MCF 10A (cell line): ENCODE measurements at regions of chr19 and their contacts with region 1.

Region 1: DNA sequence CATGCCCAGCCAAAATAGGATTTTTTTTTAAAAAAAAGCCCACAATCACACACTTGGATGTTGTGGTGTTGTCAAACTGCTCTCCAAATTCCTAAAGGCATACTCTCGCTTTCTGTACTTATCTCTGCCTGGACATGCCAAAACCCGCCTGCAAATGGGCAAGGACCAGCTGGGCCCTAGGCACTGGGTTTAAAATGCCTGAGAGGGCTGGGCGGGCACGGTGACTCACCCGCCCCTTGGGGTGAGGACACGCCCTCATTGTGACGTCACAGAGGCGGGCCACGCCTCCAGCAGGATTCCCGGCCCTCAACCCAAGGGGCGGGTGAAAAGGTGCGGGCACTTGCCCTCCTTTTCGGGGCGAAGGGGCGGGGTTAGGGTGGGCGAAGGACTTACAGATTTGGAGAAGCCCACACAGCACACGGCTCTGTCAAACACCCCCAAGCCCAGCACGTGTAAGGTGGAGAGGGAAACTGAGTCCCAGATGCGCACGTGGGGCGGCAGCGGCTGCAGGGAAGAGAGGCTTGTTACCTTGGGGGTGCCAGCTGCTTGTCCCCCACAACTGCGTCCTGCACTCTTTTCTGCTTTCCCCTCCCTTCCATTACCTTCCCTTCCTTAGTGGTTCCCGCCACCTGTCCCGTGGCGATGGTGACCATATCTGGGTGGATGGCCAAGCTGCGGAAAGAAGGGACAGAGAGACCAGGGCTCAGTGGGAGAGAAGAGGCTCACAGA is 6.6 kb downstream of the EML2 start:
- DNase-seq: peak; percentile 98
- H3K4me3 Mint-ChIP-seq: peak overlapping the region; percentile 68
- H3K27ac Mint-ChIP-seq: peak overlapping the region; percentile 98
- H3K4me1 Mint-ChIP-seq: peaks cover 11% of the 10 kb centered on the region
- H3K27me3 Mint-ChIP-seq: no peaks in the 10 kb centered on the region
- CTCF ChIP-seq: no peak

Region 2: DNA sequence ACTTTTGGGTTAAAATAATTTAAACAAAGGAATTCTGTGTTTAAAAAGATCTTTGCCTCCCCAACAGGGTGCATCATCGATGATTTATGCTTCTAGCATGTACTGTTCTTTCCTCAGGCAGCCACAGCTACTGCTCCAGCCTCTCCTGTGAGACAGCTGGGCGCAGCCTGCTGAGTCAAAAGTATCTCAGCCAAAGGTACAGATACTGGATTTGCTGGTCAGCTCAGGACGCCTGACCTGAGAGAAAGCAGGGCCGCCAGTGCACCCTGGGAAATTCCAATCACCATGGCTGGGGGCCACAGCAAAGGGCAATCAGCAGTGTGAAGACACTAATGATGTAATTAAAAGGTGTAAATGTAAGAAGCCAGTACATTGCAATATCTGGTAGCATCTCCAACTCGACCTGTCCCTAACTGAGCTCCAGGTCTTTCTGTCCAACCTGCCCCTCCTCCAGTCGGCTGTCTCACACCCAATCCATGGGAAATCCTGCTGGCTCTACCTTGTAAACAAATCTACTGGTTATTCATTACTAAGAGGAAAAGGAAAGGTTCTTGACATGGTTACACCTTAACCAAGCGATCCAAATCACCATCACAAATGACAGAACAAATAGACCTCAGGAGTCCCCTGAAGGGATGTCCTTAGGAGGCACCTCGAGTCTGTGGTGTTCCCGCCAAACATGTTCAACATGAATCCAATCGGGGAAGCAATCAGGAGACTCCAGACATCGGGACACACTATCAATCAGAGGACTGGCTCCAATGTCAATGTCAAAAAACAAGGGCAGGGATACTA is 55.3 kb before region 1 on chr19:
- CTCF ChIA-PET with region 1: no interaction called
- POLR2A ChIA-PET with region 1: interaction called, 10 read pairs
- intact Hi-C with region 1: no loop called
- DNase-seq: peak; percentile 77
- H3K4me3 Mint-ChIP-seq: peak overlapping the region; percentile 57
- H3K27ac Mint-ChIP-seq: peak overlapping the region; percentile 84
- H3K4me1 Mint-ChIP-seq: peaks cover 27% of the 10 kb centered on the region
- H3K27me3 Mint-ChIP-seq: no peaks in the 10 kb centered on the region
- CTCF ChIP-seq: no peak

Region 3: DNA sequence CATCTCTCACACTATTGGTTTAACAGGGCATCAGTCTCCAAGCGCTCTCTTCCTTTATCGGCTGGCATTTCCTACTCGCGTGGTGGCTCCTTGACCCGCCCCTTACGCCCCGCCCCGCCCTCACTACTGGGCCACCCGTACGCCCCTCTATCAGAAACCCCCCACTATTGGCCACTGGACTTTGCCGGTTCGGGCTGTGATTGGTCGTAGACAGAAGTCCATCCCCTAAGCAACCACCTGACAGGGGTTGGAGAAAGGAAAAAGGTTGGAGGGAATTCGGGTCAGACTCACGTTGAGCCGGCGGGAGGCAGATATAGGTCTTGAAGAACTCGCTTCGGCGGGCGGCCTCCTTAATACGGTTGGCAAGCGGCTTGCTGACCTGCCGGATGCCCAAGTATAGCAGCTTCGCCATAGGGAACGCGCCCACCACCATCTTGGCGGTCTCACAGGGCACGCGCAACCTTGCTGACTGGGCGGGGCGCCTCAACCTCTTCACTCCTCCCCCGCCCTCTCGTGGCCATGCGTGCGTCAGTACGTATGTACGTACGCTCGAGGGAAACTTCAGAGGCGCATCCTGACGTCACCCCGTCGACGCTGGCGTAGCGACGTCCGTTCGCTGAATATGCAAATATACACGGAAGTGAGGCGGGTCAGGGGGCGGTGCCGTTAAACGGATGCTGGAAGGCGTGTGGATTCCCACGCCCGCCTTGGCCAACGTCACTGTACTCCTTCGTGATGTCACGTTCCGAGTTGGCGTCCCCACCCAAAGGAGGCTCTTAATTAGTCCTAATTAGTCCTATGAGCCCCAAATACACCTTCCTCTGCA is 48.1 kb before region 1 on chr19 and contains the start of gene OPA3:
- CTCF ChIA-PET with region 1: no interaction called
- POLR2A ChIA-PET with region 1: interaction called, 13 read pairs
- intact Hi-C with region 1: no loop called
- DNase-seq: peak; percentile 100
- H3K4me3 Mint-ChIP-seq: peak within 1 kb of the TSS; percentile 97
- H3K27ac Mint-ChIP-seq: peak within 1 kb of the TSS; percentile 98
- H3K4me1 Mint-ChIP-seq: peaks cover 11% of the 10 kb centered on the region
- H3K27me3 Mint-ChIP-seq: no peaks in the 10 kb centered on the region
- CTCF ChIP-seq: no peak
- total RNA-seq, gene OPA3: 16.8 and 17.3 TPM in 2 replicates

Region 4: GRCh38 chr19:45615795-45616708 is 16.6 kb before region 1 on chr19:
- CTCF ChIA-PET with region 1: interaction called, 8 read pairs
- POLR2A ChIA-PET with region 1: interaction called, 88 read pairs
- intact Hi-C with region 1: loop called (anchors 1 kb)
- DNase-seq: peak; percentile 97
- H3K4me3 Mint-ChIP-seq: no peak overlapping the region
- H3K27ac Mint-ChIP-seq: peak overlapping the region; percentile 95
- H3K4me1 Mint-ChIP-seq: peaks cover 19% of the 10 kb centered on the region
- H3K27me3 Mint-ChIP-seq: no peaks in the 10 kb centered on the region
- CTCF ChIP-seq: no peak

Region 5: DNA sequence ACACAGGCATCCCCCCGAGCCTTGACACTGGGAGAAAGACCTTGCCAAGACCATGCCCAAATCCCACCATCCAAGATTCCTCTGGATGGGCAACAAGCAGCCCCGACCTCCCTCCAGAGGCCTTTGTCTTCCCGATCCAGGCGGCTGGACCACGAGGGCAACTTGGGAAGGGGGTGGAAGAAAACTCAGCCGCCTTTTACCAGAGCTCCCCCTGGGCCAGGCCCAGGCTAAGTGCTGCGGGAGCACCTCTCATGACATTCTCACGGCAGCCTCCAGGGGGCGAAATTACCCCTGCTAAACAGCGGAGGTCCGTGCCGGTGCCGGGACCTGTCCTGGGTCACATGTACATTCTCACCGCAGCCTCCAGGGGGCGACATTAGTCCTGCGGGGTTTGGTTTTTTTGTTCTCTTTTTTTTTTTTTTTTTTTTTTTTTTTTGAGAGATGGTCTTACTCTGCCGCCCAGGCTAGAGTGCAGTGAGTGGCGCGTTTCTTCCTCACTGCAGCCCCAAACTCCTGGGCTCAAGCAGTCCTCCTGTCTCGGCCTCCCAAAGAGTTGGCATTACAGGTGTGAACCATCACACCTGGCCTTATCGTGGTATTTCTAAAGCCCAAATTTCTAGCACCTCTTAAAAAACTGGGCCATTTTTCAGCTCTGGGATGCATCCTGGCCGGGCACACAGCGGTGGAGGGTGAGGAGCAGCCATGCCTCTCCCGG is 184.5 kb after region 1 on chr19:
- CTCF ChIA-PET with region 1: no interaction called
- POLR2A ChIA-PET with region 1: no interaction called
- intact Hi-C with region 1: no loop called
- DNase-seq: peak; percentile 93
- H3K4me3 Mint-ChIP-seq: no peak overlapping the region
- H3K27ac Mint-ChIP-seq: no peak overlapping the region
- H3K4me1 Mint-ChIP-seq: no peaks in the 10 kb centered on the region
- H3K27me3 Mint-ChIP-seq: no peaks in the 10 kb centered on the region
- CTCF ChIP-seq: peak; percentile 96

Region 6: GRCh38 chr19:46049597-46049996 is 417.0 kb after region 1 on chr19:
- CTCF ChIA-PET with region 1: no interaction called
- POLR2A ChIA-PET with region 1: no interaction called
- intact Hi-C with region 1: no loop called
- DNase-seq: no peak
- H3K4me3 Mint-ChIP-seq: no peak overlapping the region
- H3K27ac Mint-ChIP-seq: no peak overlapping the region
- H3K4me1 Mint-ChIP-seq: no peaks in the 10 kb centered on the region
- H3K27me3 Mint-ChIP-seq: peaks cover 55% of the 10 kb centered on the region
- CTCF ChIP-seq: no peak